Esophagus squamous epithelium (tissue), 5 donors: ENCODE measurements at regions of chr2 and their contacts with region 1.

Region 1: GRCh38 chr2:231394211-231395141 is 1.0 kb upstream of the B3GNT7 start:
- DNase-seq: no peak
- H3K4me3 ChIP-seq: peak overlapping the region in 2 of 4 donors; percentile 56 to 73
- H3K27ac ChIP-seq: peak overlapping the region in 3 of 4 donors; percentile 25 to 58 (median 57)
- H3K4me1 ChIP-seq: peaks cover 12 to 31% (median 15%) of the 10 kb centered on the region in 3 donors
- H3K27me3 ChIP-seq: peaks cover 0 to 67% (median 4%) of the 10 kb centered on the region in 4 donors
- CTCF ChIP-seq: peak in 1 of 6 experiments; percentile 39
- POLR2A ChIP-seq: no peak

Region 2: DNA sequence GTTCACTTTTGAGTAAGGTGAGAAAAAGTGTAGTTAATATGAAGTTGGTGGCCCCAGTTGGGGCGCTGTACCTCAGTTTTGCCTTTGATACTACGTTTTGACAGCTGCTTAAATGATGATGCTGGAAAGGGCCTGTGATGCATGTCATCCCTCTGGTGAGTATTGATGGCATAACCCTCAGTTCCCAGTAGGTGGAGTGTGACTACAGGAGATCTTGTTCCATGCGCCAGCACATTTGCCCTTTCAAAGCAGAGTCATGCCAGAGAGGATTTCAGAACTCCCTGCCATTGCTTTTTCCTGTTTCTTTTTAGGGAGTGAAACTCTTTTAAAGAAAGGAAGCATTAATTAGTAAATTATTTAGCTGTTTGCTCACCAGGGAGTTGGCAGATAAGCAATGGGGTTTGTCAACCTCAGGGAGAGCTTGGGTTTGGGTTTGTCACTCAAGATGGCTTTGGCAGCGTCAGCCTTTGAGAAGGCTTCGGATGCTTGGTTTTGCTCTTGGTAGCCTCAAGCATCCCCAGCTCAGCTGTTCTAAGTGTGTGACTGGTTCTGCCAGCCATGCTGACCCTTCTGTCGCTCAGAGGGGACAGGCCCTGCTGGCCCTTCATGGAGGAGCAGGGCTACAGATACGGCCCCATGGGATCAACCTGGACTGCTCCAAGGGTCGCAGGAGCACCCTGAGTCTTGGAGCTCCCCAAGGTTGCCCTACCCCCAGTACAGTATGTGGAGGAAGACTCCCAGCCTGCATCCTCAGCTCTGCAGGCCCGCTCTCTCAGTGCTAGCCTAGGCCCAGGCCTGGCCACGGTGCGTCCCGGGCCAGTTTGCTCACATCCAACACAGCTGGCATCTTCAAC is 166.9 kb before region 1 on chr2:
- intact Hi-C with region 1: loop called (anchors 10 kb)
- DNase-seq: no peak
- H3K4me3 ChIP-seq: no peak overlapping the region
- H3K27ac ChIP-seq: peak overlapping the region in 3 of 4 donors; percentile 59 to 73 (median 71)
- H3K4me1 ChIP-seq: peaks cover 0 to 17% (median 4%) of the 10 kb centered on the region in 3 donors
- H3K27me3 ChIP-seq: no peaks in the 10 kb centered on the region
- CTCF ChIP-seq: peak; percentile 43 to 86 (median 70)
- POLR2A ChIP-seq: no peak

Region 3: DNA sequence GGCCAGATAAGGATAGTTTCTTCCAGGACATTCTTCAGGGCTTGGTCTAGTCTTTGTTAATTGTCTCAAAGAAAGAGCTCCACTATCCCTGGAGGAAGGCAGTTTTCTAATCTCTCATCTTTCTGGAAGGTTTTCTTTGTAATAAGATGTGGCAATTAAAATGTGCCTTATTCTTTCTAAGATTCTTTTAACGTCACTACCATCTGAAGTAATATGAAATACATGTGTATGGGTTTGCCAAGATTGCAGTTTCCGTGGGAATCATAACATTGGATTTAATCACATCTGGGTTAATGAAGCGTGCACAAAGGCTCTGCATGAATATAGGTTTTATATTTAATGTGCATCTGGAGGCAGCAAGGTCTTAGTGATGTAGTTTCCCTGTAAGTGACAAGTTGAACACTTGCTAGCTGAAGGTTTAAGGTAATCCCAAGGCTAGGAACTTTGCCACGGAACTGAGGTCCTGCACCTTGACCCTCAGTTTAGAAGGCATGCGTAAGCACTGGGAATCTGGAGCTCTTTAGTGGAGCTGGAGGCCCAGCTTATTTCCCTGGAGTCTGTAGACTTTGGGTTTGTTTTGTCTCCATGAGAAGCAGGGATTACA is 592.8 kb after region 1 on chr2:
- intact Hi-C with region 1: no loop called
- DNase-seq: no peak
- H3K4me3 ChIP-seq: no peak overlapping the region
- H3K27ac ChIP-seq: no peak overlapping the region
- H3K4me1 ChIP-seq: peaks cover 0 to 26% (median 6%) of the 10 kb centered on the region in 3 donors
- H3K27me3 ChIP-seq: no peaks in the 10 kb centered on the region
- CTCF ChIP-seq: no peak
- POLR2A ChIP-seq: no peak

Region 4: GRCh38 chr2:232008907-232009638 is 614.6 kb after region 1 on chr2:
- intact Hi-C with region 1: no loop called
- DNase-seq: no peak
- H3K4me3 ChIP-seq: no peak overlapping the region
- H3K27ac ChIP-seq: no peak overlapping the region
- H3K4me1 ChIP-seq: peaks cover 0 to 15% (median 2%) of the 10 kb centered on the region in 3 donors
- H3K27me3 ChIP-seq: no peaks in the 10 kb centered on the region
- CTCF ChIP-seq: no peak
- POLR2A ChIP-seq: no peak